ENCODE measurements at regions of chr5 and their contacts with region 1.

Region 1: DNA sequence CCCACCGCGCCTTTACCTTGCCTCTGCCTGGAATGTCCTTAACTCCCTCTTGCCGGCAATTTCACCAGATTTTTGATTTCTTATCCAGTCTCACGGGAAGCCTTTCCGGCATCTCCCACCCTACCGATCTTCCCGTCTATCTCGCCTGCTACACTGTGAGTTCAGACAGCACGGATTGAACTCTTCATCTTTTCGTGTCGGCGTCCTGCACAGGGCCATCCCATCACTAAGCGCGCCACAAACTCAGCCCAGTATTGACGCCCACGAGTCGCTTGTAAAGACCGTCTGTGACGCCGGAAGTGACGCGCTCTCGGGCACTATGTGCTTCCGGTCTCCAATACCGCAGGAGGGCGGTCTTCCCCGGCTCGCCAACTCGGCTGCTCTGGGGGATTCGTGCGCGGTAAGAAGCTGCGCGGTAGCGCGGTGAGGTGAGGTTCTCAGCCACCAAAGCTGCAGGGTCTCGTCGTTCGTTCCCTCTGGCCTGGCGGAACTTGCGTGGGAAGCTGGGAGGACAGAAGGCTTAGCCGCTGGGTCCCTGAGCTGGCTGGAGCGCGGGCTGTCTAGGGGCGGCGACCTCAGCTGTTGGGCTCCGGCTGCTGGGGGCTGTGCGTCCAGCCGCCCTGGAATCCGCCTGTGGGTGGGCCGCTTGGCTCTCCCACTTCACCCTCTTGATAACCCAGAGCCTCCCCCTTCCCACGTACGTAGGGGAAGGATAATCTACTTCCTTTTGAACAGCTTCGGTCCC is at the start of gene ZCCHC9:
- DNase-seq: peak; percentile 92
- ATAC-seq: peak; percentile 92
- H3K4me3 Mint-ChIP-seq: peak within 1 kb of the TSS; percentile 96
- H3K27ac Mint-ChIP-seq: peak within 1 kb of the TSS; percentile 99
- H3K4me1 Mint-ChIP-seq: peaks cover 17% of the 10 kb centered on the region
- H3K27me3 Mint-ChIP-seq: no peaks in the 10 kb centered on the region
- CTCF ChIP-seq: no peak
- total RNA-seq, gene ZCCHC9: 30.4 to 30.8 TPM (median 30.8 TPM) in 3 replicates

Region 2: GRCh38 chr5:81233080-81233634 is 68.3 kb before region 1 on chr5 and contains the start of gene CKMT2:
- CTCF ChIA-PET with region 1: interaction called, 19 read pairs
- POLR2A ChIA-PET with region 1: no interaction called
- DNase-seq: peak; percentile 88
- ATAC-seq: peak; percentile 94
- H3K4me3 Mint-ChIP-seq: peak within 1 kb of the TSS; percentile 81
- H3K27ac Mint-ChIP-seq: peak within 1 kb of the TSS; percentile 89
- H3K4me1 Mint-ChIP-seq: peaks cover 28% of the 10 kb centered on the region
- H3K27me3 Mint-ChIP-seq: no peaks in the 10 kb centered on the region
- CTCF ChIP-seq: no peak
- total RNA-seq, gene CKMT2: 1.8 to 3.1 TPM (median 2.4 TPM) in 3 replicates

Region 3: DNA sequence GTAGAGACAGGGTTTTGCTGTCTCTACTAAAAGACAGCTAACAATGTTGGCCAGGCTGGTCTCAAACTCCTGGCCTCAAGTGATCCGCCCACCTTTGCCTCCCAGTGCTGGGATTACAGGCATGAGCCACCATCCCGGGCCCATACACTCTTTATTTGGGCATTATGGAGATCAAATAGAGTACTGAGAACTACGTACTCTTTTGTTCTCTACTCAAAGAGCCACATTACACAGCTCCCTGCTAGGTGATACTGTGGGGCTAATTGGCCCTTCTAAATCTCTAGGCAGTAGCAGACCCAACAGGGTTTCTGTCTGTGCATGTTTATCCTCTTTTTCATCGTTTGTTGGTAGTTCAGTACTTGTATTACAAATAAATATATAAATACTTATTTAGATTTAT is 52.2 kb before region 1 on chr5:
- CTCF ChIA-PET with region 1: no interaction called
- POLR2A ChIA-PET with region 1: no interaction called
- DNase-seq: no peak
- ATAC-seq: peak; percentile 44
- H3K4me3 Mint-ChIP-seq: no peak overlapping the region
- H3K27ac Mint-ChIP-seq: no peak overlapping the region
- H3K4me1 Mint-ChIP-seq: peaks cover 33% of the 10 kb centered on the region
- H3K27me3 Mint-ChIP-seq: no peaks in the 10 kb centered on the region
- CTCF ChIP-seq: no peak

Region 4: GRCh38 chr5:81269751-81270686 is 31.4 kb before region 1 on chr5:
- CTCF ChIA-PET with region 1: interaction called, 10 read pairs
- POLR2A ChIA-PET with region 1: no interaction called
- DNase-seq: peak; percentile 58
- ATAC-seq: peak; percentile 92
- H3K4me3 Mint-ChIP-seq: peak overlapping the region; percentile 26
- H3K27ac Mint-ChIP-seq: peak overlapping the region; percentile 43
- H3K4me1 Mint-ChIP-seq: peaks cover 25% of the 10 kb centered on the region
- H3K27me3 Mint-ChIP-seq: no peaks in the 10 kb centered on the region
- CTCF ChIP-seq: no peak

Region 5: DNA sequence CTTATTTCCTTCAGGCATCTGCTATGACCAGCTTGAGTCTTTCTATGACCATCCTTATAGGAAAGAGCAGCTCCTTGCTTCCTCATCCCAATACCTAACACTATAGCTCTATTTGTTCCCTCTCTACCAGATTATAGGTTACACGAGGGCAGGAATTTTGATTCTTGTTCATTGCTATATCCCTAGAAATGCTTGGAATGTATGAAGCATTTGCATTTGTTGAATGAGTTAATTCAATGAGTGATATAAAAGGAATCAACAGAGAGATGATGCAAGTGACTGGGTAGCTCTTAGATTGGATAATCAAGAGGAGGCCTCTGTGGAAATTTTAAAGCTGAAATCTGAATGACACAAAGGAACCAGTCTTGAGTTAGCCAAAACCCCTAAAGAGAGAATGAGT is 13.9 kb after region 1 on chr5:
- CTCF ChIA-PET with region 1: interaction called, 10 read pairs
- POLR2A ChIA-PET with region 1: interaction called, 3 read pairs
- DNase-seq: no peak
- ATAC-seq: peak; percentile 66
- H3K4me3 Mint-ChIP-seq: no peak overlapping the region
- H3K27ac Mint-ChIP-seq: peak overlapping the region; percentile 26; the same call in 1 of the 2 replicates
- H3K4me1 Mint-ChIP-seq: peaks cover 12% of the 10 kb centered on the region
- H3K27me3 Mint-ChIP-seq: no peaks in the 10 kb centered on the region
- CTCF ChIP-seq: no peak

Region 6: GRCh38 chr5:81383867-81384266 is 82.4 kb after region 1 on chr5:
- CTCF ChIA-PET with region 1: no interaction called
- POLR2A ChIA-PET with region 1: no interaction called
- DNase-seq: no peak
- ATAC-seq: no peak
- H3K4me3 Mint-ChIP-seq: no peak overlapping the region
- H3K27ac Mint-ChIP-seq: no peak overlapping the region
- H3K4me1 Mint-ChIP-seq: no peaks in the 10 kb centered on the region
- H3K27me3 Mint-ChIP-seq: no peaks in the 10 kb centered on the region; the same call in 1 of the 2 replicates
- CTCF ChIP-seq: no peak

Region 7: GRCh38 chr5:81393783-81394718 is 92.6 kb after region 1 on chr5 and contains the start of gene ACOT12:
- CTCF ChIA-PET with region 1: interaction called, 12 read pairs
- POLR2A ChIA-PET with region 1: no interaction called
- DNase-seq: peak; percentile 59
- ATAC-seq: peak; percentile 80
- H3K4me3 Mint-ChIP-seq: peak within 1 kb of the TSS; percentile 73
- H3K27ac Mint-ChIP-seq: no peak within 1 kb of the TSS
- H3K4me1 Mint-ChIP-seq: no peaks in the 10 kb centered on the region
- H3K27me3 Mint-ChIP-seq: peaks cover 41% of the 10 kb centered on the region
- CTCF ChIP-seq: no peak
- total RNA-seq, gene ACOT12: 0.16 TPM in 1 of 3 replicates, not detected in the others

Region 8: GRCh38 chr5:81495286-81495685 is 193.8 kb after region 1 on chr5:
- CTCF ChIA-PET with region 1: no interaction called
- POLR2A ChIA-PET with region 1: no interaction called
- DNase-seq: no peak
- ATAC-seq: no peak
- H3K4me3 Mint-ChIP-seq: no peak overlapping the region
- H3K27ac Mint-ChIP-seq: no peak overlapping the region
- H3K4me1 Mint-ChIP-seq: no peaks in the 10 kb centered on the region
- H3K27me3 Mint-ChIP-seq: no peaks in the 10 kb centered on the region
- CTCF ChIP-seq: no peak